ENCODE measurements at regions of chrX and their contacts with region 1.

Region 1: GRCh38 chrX:78555401-78555980 is 103.6 kb downstream of the RTL3 start:
- DNase-seq: no peak
- ATAC-seq: no peak
- H3K4me3 Mint-ChIP-seq: no peak overlapping the region
- H3K27ac Mint-ChIP-seq: peak overlapping the region; percentile 75
- H3K4me1 Mint-ChIP-seq: peaks cover 13% of the 10 kb centered on the region
- H3K27me3 Mint-ChIP-seq: no peaks in the 10 kb centered on the region
- CTCF ChIP-seq: no peak

Region 2: DNA sequence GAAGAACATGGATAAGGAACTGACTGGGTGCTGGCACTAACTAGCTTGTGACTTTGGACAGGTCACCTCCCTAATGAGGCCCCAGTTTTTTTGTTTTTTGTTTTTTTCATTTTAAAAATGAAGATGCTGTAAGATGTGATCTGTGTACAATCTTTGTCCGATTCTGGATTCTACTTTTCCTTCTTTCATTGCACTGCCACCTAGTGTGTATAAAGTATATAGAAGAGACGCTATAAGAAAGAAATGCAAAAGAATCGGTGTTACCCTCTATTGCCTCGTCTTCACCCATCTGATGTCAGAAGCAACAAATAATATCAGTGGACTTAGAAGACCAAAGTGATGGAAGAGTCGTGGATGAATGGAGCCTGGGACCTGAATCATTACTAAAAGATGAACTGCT is 331.1 kb after region 1 on chrX:
- CTCF ChIA-PET with region 1: interaction called, 3 read pairs
- POLR2A ChIA-PET with region 1: no interaction called
- intact Hi-C with region 1: loop called (anchors 1 kb)
- DNase-seq: no peak
- ATAC-seq: no peak
- H3K4me3 Mint-ChIP-seq: no peak overlapping the region
- H3K27ac Mint-ChIP-seq: no peak overlapping the region
- H3K4me1 Mint-ChIP-seq: peaks cover 6% of the 10 kb centered on the region
- H3K27me3 Mint-ChIP-seq: no peaks in the 10 kb centered on the region
- CTCF ChIP-seq: no peak

Region 3: GRCh38 chrX:79081895-79082512 is 526.5 kb after region 1 on chrX:
- CTCF ChIA-PET with region 1: interaction called, 32 read pairs
- POLR2A ChIA-PET with region 1: no interaction called
- intact Hi-C with region 1: loop called (anchors 1 kb)
- DNase-seq: no peak
- ATAC-seq: peak; percentile 77
- H3K4me3 Mint-ChIP-seq: peak overlapping the region; percentile 0
- H3K27ac Mint-ChIP-seq: peak overlapping the region; percentile 77
- H3K4me1 Mint-ChIP-seq: peaks cover 12% of the 10 kb centered on the region
- H3K27me3 Mint-ChIP-seq: no peaks in the 10 kb centered on the region
- CTCF ChIP-seq: no peak

Region 4: GRCh38 chrX:79412972-79413371 is 857.5 kb after region 1 on chrX:
- CTCF ChIA-PET with region 1: interaction called, 14 read pairs
- POLR2A ChIA-PET with region 1: no interaction called
- intact Hi-C with region 1: loop called (anchors 1 kb)
- DNase-seq: no peak
- ATAC-seq: no peak
- H3K4me3 Mint-ChIP-seq: peak overlapping the region; percentile 11
- H3K27ac Mint-ChIP-seq: no peak overlapping the region
- H3K4me1 Mint-ChIP-seq: peaks cover under 1% of the 10 kb centered on the region
- H3K27me3 Mint-ChIP-seq: no peaks in the 10 kb centered on the region
- CTCF ChIP-seq: no peak

Region 5: GRCh38 chrX:79452881-79453280 is 897.4 kb after region 1 on chrX:
- CTCF ChIA-PET with region 1: interaction called, 4 read pairs
- POLR2A ChIA-PET with region 1: no interaction called
- intact Hi-C with region 1: loop called (anchors 1 kb)
- DNase-seq: no peak
- ATAC-seq: no peak
- H3K4me3 Mint-ChIP-seq: no peak overlapping the region
- H3K27ac Mint-ChIP-seq: no peak overlapping the region
- H3K4me1 Mint-ChIP-seq: peaks cover 2% of the 10 kb centered on the region
- H3K27me3 Mint-ChIP-seq: no peaks in the 10 kb centered on the region
- CTCF ChIP-seq: no peak

Measured in activated B cell treated with CpG ODN at 0.5 μM for 24 hours (primary cell).